ENCODE measurements at regions of chr5 and their contacts with region 1.

Region 1: DNA sequence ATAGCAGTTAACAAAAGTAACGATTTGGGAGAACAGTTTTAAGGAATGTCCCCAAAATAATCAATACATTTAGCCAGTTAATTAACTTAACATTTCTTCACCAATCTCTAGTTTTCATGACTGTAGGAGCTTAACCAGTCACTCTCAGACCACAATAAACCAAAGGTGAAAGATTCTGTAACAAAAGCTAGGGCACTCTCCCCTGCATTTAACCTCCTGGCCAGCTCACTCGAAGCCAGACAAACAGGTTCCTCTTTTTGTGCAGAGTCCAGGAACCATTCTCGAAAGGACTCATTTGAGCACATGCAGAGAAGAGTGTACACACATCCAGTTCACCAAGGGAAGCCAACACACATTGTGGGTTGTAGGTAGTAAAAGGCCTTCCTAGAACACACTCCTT is 6.5 kb downstream of the IL7R start:
- DNase-seq: peak; percentile 56
- ATAC-seq: peak; percentile 71
- H3K4me3 Mint-ChIP-seq: peak overlapping the region; percentile 89
- H3K27ac Mint-ChIP-seq: peak overlapping the region; percentile 95
- H3K4me1 Mint-ChIP-seq: peaks cover 82% of the 10 kb centered on the region
- H3K27me3 Mint-ChIP-seq: no peaks in the 10 kb centered on the region

Region 2: DNA sequence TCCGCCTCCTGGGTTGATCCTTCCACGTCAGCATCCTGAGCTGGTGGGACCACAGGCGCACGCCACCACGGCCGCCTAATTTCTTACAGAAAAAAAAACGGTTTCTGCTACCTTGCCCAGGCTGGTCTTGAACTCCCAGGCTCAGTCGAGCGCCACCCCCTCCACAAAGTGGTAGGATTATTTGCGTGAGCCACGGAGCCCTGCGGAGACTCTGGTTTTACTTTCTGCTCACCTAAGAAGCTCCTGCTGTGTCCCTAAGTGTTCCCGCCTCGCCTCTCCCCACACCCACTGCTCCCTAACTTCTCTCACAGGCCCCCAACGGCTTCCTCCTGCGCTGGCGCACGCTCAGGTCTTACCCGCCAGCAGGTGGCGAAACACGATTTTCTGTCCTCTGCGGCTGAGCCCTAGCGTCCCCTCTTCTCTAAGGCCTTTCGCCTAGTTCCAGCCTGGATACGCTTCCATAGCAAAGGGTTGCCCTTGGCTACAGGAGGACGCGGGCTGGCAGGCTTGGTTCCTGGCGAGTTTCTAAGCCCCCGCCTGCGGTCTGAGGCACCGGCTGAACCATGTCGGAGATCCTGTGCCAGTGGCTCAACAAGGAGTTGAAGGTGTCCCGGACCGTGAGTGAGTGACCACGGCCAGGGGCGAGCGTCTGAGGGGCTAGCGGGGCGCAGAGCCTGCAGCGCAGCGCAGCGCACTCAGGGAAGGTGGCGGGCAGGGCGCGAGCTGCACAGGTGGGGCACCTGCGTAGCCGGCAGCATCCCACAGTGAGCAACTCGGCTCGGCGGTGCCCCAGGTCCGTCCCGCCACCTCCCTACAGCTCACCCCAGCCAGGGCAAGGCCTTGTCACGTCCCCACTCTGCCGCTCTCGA is 245.5 kb before region 1 on chr5 and contains the start of gene SPEF2:
- CTCF ChIA-PET with region 1: interaction called, 4 read pairs
- POLR2A ChIA-PET with region 1: interaction called, 3 read pairs
- intact Hi-C with region 1: loop called in 1 of 2 experiments (anchors 5 kb)
- DNase-seq: peak; percentile 91
- ATAC-seq: peak; percentile 92
- H3K4me3 Mint-ChIP-seq: peak within 1 kb of the TSS; percentile 83
- H3K27ac Mint-ChIP-seq: peak within 1 kb of the TSS; percentile 99
- H3K4me1 Mint-ChIP-seq: peaks cover 31% of the 10 kb centered on the region
- H3K27me3 Mint-ChIP-seq: no peaks in the 10 kb centered on the region
- total RNA-seq, gene SPEF2: 14.1 to 14.6 TPM

Region 3: GRCh38 chr5:35876921-35877320 is 13.8 kb after region 1 on chr5:
- CTCF ChIA-PET with region 1: interaction called, 13 read pairs
- POLR2A ChIA-PET with region 1: interaction called, 5 read pairs
- intact Hi-C with region 1: no loop called
- DNase-seq: no peak
- ATAC-seq: peak; percentile 46
- H3K4me3 Mint-ChIP-seq: no peak overlapping the region
- H3K27ac Mint-ChIP-seq: peak overlapping the region; percentile 88
- H3K4me1 Mint-ChIP-seq: peaks cover 77% of the 10 kb centered on the region
- H3K27me3 Mint-ChIP-seq: no peaks in the 10 kb centered on the region